Activated naive CD4-positive, alpha-beta T cell treated with anti-CD3 and anti-CD28 coated beads, Interleukin-2, amount 10 ng/mL, durations not matched to agents 7 days and 5 days (primary cell): ENCODE measurements at regions of chr17 and their contacts with region 1.

Region 1: DNA sequence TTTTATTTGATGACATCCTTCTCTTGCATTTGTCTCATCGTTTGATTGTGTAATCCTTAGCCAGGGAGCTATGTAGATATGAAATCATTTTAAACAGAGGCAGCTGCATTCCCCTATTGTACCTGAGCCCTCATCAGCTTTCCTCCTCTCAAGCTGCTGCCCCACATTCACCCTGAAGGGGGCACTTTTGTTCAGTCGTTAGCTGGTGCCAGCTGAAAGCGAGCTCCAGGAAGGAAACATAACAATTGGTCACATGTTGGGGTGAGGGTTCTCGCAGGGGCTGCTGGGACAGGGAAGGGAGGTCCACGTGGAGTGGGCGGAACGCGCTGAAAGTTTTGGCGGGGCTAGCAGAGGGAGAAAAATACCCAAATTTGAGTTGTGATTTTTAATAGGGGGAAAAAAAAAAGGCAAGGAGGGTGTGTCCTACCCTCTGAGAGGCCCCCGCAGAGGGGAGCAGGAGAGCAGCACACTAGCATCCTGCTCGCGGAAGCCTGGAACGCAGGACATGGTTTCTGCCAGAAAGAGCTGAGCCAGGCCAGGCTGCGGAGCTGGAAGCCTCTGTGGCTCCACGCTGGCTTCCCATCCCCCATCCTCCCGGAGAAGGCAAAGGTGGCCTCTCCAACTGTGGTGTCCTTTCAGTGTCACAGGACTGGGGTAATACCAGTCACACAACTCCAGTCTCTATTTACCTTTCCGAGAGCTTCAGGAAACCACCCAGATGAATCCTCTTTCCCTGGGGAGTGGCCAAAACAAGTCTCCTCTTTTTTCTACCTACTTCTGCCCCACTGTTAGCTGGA is 8.5 kb upstream of the MSL1 start:
- DNase-seq: peak; percentile 97
- H3K4me3 Mint-ChIP-seq: peak overlapping the region; percentile 84
- H3K27ac Mint-ChIP-seq: peak overlapping the region; percentile 82
- H3K4me1 Mint-ChIP-seq: peaks cover 59% of the 10 kb centered on the region
- H3K27me3 Mint-ChIP-seq: peaks cover 8% of the 10 kb centered on the region

Region 2: GRCh38 chr17:40062329-40063186 is 50.8 kb before region 1 on chr17 and contains the start of gene THRA:
- CTCF ChIA-PET with region 1: interaction called, 24 read pairs
- DNase-seq: peak; percentile 77
- H3K4me3 Mint-ChIP-seq: peak within 1 kb of the TSS; percentile 82
- H3K27ac Mint-ChIP-seq: peak within 1 kb of the TSS; percentile 24
- H3K4me1 Mint-ChIP-seq: peaks cover 39% of the 10 kb centered on the region
- H3K27me3 Mint-ChIP-seq: peaks cover 71% of the 10 kb centered on the region

Region 3: DNA sequence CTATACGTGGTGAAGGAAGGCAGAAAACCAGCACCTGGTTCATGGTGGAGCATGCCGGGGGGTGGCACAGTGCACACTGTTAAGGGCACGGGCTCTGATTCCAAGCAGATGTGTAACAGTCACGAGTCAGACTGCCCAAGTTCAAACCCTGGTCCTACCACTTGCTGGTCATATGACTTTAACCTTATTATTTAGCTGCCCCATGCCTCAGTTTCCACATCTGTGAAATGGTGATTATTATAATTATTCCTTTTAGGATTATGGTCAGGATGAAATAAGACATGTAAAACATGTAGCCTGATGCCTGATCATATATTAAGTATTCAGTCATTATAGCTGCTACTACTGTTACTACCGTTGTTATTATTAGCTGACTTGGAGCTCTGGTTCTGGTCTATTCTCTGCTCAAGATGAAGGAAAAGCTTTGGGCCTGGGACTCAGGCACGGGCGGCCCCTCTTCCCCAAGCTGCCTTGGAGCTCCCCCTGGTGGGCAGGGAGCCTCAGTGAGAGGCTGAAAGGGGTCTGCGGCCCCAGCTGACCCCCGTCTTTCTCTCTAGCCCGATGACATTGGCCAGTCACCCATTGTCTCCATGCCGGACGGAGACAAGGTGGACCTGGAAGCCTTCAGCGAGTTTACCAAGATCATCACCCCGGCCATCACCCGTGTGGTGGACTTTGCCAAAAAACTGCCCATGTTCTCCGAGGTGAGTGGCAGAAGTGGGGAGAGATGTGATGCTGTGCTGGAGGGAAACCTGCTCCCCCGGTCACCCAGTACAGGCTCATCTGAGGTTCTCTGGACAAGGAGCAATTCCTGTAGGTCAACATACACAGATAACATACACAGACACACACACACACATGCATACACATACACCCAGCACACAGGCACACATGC is 26.9 kb before region 1 on chr17:
- CTCF ChIA-PET with region 1: interaction called, 12 read pairs
- DNase-seq: peak; percentile 70
- H3K4me3 Mint-ChIP-seq: no peak overlapping the region
- H3K27ac Mint-ChIP-seq: no peak overlapping the region
- H3K4me1 Mint-ChIP-seq: no peaks in the 10 kb centered on the region
- H3K27me3 Mint-ChIP-seq: no peaks in the 10 kb centered on the region

Region 4: GRCh38 chr17:40139566-40140058 is 26.3 kb after region 1 on chr17:
- CTCF ChIA-PET with region 1: interaction called, 16 read pairs
- DNase-seq: no peak
- H3K4me3 Mint-ChIP-seq: peak overlapping the region; percentile 94
- H3K27ac Mint-ChIP-seq: peak overlapping the region; percentile 96
- H3K4me1 Mint-ChIP-seq: peaks cover 35% of the 10 kb centered on the region
- H3K27me3 Mint-ChIP-seq: no peaks in the 10 kb centered on the region

Region 5: DNA sequence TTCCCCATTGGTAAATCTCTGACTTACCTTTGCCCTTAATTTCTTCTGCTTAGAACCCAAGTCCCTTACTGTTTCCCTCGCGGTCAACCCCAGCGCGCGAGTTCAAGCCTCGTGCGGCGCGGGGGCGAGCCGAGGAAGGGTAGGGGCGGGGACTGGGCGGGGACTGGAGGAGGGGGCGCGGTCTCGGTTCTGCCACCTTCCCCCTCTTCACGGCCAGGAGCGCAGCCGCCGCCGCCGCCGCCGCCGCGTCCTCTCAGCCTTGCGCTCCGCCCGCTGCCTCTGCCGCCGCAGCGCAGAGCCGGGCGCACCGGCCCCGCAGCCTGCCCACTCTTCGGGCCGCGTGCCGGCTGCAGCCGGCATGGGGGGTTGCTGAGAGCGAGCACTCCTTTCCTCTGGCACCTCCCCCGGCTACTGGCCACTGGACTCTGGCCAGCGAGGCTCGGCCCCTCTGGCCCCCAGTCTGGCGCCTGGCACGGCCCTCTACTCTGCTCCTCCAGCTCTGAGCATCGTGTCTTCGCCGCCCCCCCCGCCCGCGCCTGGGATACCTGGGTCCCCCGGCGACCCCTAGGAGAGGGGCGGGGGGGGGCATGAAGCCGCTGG is 64.1 kb after region 1 on chr17 and contains the start of gene RAPGEFL1:
- CTCF ChIA-PET with region 1: interaction called, 19 read pairs
- DNase-seq: peak; percentile 89
- H3K4me3 Mint-ChIP-seq: peak within 1 kb of the TSS; percentile 35
- H3K27ac Mint-ChIP-seq: peak within 1 kb of the TSS; percentile 83
- H3K4me1 Mint-ChIP-seq: peaks cover 9% of the 10 kb centered on the region
- H3K27me3 Mint-ChIP-seq: peaks cover 8% of the 10 kb centered on the region

Region 6: DNA sequence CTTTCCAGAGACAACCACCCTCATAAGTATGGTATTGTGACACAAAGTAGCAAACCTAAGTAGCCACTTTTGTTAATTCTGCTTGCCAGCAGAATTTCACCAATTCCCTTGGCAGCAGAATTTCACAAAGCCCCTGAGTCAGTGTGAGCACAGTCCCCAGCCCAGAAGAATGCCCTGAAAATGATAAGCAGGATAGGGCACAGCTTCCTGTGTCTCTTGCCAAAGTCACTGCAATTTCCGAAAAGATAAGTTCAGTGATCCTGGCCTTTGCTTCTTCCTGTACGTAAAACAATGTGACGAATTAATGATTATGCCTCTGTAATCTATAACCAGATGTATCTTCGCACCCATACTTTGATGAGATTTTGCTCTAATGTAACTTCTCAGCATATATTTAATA is 89.8 kb after region 1 on chr17:
- CTCF ChIA-PET with region 1: interaction called, 21 read pairs
- DNase-seq: no peak
- H3K4me3 Mint-ChIP-seq: no peak overlapping the region
- H3K27ac Mint-ChIP-seq: no peak overlapping the region
- H3K4me1 Mint-ChIP-seq: peaks cover 6% of the 10 kb centered on the region
- H3K27me3 Mint-ChIP-seq: peaks cover 48% of the 10 kb centered on the region